ENCODE measurements at regions of chr3 and their contacts with region 1.

Region 1: GRCh38 chr3:171269542-171269941 is 190.7 kb downstream of the TNIK start:
- DNase-seq: no peak
- ATAC-seq: peak; percentile 51
- H3K4me3 Mint-ChIP-seq: peak overlapping the region; percentile 40
- H3K27ac Mint-ChIP-seq: no peak overlapping the region
- H3K4me1 Mint-ChIP-seq: peaks cover 82% of the 10 kb centered on the region
- H3K27me3 Mint-ChIP-seq: no peaks in the 10 kb centered on the region

Region 2: DNA sequence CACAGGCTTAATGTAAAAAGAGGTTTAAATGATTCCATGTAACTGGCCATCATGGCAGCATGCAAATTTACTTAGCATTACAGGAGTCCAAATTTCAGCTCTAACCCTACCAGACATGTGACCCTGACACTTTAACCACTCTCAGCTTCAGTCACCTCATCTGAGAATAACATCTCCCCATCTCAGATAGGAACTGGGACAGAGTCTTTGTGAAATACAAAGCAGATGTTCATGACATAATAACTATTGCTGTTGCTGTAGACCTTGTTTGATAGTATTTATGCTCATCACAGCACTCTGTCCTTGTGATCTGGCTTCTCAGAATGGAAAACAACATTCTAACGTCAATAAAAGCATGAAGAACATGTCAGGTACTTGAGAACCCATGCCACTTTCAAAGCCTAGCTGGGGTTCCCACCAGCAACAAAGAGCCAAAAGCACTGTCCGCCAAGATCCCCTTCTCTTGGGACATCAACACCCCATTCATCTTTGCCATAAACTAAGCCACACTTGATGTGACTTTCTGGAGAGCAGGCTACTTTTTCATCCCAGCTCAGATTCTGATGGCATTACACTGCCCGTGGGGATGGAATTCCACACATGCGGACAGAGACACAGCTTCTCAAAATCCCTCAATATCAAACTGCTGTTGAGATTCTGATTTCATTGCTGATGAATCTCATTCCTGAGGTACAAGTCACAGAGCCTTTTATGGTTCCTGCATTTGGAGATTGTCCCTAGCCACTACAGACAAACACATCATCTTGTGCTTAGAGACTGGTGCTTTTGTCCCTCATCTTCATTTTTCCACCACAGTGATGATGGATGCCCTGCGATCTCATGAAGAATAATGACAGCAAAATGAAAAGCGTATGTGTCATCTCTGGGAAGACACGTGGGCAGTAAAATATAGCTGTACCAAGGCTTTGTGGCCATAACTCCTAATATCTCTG is 12.0 kb before region 1 on chr3:
- CTCF ChIA-PET with region 1: interaction called, 6 read pairs
- POLR2A ChIA-PET with region 1: interaction called, 4 read pairs
- intact Hi-C with region 1: loop called in 1 of 2 experiments (anchors 1 kb)
- DNase-seq: no peak
- ATAC-seq: peak; percentile 28
- H3K4me3 Mint-ChIP-seq: no peak overlapping the region
- H3K27ac Mint-ChIP-seq: peak overlapping the region; percentile 84
- H3K4me1 Mint-ChIP-seq: peaks cover 93% of the 10 kb centered on the region
- H3K27me3 Mint-ChIP-seq: no peaks in the 10 kb centered on the region